Endothelial cell of umbilical vein (primary cell): ENCODE measurements at regions of chr1 and their contacts with region 1.

Region 1: DNA sequence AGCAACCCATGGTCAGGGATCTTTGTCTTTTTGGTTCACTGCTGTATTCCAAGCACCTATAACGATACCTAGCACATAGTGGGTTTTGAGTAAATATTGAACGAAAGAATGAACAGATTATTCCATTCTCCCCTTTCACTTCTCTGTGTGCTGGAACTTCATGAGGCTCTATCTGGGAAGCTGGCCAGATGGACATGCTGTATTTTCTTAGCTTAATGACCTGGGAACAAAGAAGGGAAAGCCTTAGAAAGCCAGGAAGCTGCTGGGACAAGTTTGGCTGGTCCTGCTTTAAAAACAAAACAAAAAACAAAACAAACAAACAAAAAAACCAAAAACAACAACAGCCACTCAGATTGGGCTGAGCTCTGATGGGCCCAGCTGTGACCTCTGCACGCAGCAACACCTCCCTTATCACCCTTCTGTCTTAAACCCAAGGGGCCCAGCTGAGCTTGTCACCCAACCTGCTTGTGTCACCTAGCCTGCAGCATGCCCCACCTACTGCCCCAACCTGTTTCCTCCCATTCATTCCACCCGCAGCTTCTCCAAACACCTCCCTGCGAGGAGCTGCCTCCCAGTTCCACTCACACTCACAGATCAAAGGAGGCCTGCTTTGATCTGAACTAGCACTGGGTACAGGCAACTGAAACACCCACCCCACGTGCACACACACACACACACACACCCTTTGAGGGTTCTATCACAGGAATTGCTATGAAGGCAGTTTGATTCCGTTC is 37.1 kb downstream of the SLC30A1 start:
- DNase-seq: peak; percentile 84
- H3K4me3 ChIP-seq: no peak overlapping the region
- H3K27ac ChIP-seq: no peak overlapping the region
- H3K4me1 ChIP-seq: peaks cover 14% of the 10 kb centered on the region
- H3K27me3 ChIP-seq: no peaks in the 10 kb centered on the region
- CTCF ChIP-seq: no peak
- POLR2A ChIP-seq: no peak

Region 2: DNA sequence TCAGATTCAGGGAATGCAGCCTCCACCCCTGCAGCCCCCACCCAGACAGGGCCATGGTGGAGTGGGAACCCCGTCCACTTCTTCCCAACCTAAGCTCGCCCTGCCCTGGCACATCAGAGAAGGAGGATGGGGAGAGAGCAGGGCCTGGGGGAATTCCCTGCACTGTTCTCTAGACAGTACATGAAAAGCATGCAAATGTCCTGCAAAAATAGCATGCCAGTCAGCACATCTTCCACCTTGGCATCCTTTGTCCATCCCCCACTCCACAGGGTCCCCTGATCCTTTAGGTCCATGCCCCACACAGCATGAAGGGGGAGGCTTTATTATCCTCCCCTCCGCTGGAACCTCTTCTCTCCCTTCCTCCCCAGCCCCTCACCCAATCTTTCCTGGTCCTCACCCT is 14.9 kb before region 1 on chr1:
- CTCF ChIA-PET with region 1: interaction called, 12 read pairs
- POLR2A ChIA-PET with region 1: interaction called, 4 read pairs
- dilution Hi-C with region 1: no loop called
- intact Hi-C with region 1: no loop called
- DNase-seq: no peak
- H3K4me3 ChIP-seq: no peak overlapping the region
- H3K27ac ChIP-seq: no peak overlapping the region
- H3K4me1 ChIP-seq: peaks cover 10% of the 10 kb centered on the region
- H3K27me3 ChIP-seq: no peaks in the 10 kb centered on the region
- CTCF ChIP-seq: no peak
- POLR2A ChIP-seq: no peak

Region 3: GRCh38 chr1:211742889-211743529 is 201.1 kb after region 1 on chr1:
- CTCF ChIA-PET with region 1: no interaction called
- POLR2A ChIA-PET with region 1: no interaction called
- dilution Hi-C with region 1: no loop called
- intact Hi-C with region 1: no loop called
- DNase-seq: no peak
- H3K4me3 ChIP-seq: no peak overlapping the region
- H3K27ac ChIP-seq: no peak overlapping the region
- H3K4me1 ChIP-seq: no peaks in the 10 kb centered on the region
- H3K27me3 ChIP-seq: no peaks in the 10 kb centered on the region
- CTCF ChIP-seq: no peak
- POLR2A ChIP-seq: no peak